GM12878 (cell line): ENCODE measurements at regions of chr21 and their contacts with region 1.

Region 1: DNA sequence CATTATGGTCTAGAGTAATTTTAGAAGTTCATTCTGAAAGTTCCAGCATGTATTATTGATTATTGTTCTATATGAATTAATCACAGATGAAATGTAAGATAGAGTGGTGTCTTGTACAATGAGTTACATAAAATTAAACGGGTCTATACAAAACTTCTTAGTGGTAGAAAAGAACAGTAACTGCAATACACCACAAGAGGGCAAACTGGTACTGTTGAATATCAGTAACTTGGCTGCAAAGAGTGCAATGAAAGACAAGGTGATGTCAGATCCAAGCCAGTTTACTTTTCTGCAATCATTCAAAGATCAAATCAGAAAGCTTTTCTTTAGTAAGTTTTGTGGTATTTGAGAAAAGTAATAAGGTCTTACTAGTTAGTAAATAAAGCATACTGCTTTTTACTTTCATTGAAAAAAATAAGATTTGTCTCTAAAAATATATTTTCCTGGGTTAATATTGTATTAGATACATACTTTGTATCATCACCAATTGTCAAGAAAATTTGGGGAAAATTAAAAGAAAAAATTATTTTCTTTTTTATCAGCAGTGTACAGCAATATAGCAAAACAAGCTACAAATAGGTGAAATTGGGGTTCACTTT is 66.4 kb upstream of the BTG3 start:
- DNase-seq: peak; percentile 48
- ATAC-seq: peak; percentile 95
- H3K4me3 ChIP-seq: no peak overlapping the region
- H3K27ac ChIP-seq: no peak overlapping the region
- H3K4me1 ChIP-seq: no peaks in the 10 kb centered on the region
- H3K27me3 ChIP-seq: no peaks in the 10 kb centered on the region
- CTCF ChIP-seq: peak; percentile 70 to 89 (median 76); a peak in 5 of 6 replicates
- EP300 ChIP-seq: no peak
- POLR2A ChIP-seq: no peak
- RAD21 ChIP-seq: peak; percentile 97

Region 2: GRCh38 chr21:17903029-17903806 is 224.1 kb after region 1 on chr21:
- CTCF ChIA-PET with region 1: interaction called, 17 read pairs
- POLR2A ChIA-PET with region 1: no interaction called
- RAD21 ChIA-PET with region 1: interaction called, 12 read pairs
- SMC1A ChIA-PET with region 1: interaction called, 20 read pairs
- in situ Hi-C with region 1: loop called (anchors 5 kb)
- intact Hi-C with region 1: loop called (anchors 1 kb)
- DNase-seq: no peak
- ATAC-seq: peak; percentile 68
- H3K4me3 ChIP-seq: no peak overlapping the region
- H3K27ac ChIP-seq: no peak overlapping the region
- H3K4me1 ChIP-seq: peaks cover 3% of the 10 kb centered on the region
- H3K27me3 ChIP-seq: no peaks in the 10 kb centered on the region
- CTCF ChIP-seq: peak in 1 of 3 experiments; percentile 40; a peak in 1 of 6 replicates
- EP300 ChIP-seq: no peak
- POLR2A ChIP-seq: no peak
- RAD21 ChIP-seq: peak; percentile 49; the same call in 1 of the 2 replicates